ENCODE measurements at regions of chr17 and their contacts with region 1.

Region 1: GRCh38 chr17:4004517-4005295 is 40.5 kb upstream of the ATP2A3 start:
- DNase-seq: peak; percentile 78 to 90
- H3K4me3 ChIP-seq: no peak overlapping the region
- H3K27ac ChIP-seq: peak overlapping the region in 4 of 5 donors; percentile 63 to 77 (median 73)
- H3K4me1 ChIP-seq: peaks cover 20 to 66% (median 47%) of the 10 kb centered on the region in 4 donors
- H3K27me3 ChIP-seq: no peaks in the 10 kb centered on the region
- CTCF ChIP-seq: peak in 6 of 7 experiments; percentile 59 to 96 (median 94)
- EP300 ChIP-seq: no peak
- POLR2A ChIP-seq: no peak

Region 2: GRCh38 chr17:3893003-3893719 is 111.5 kb before region 1 on chr17 and contains the start of gene CAMKK1:
- intact Hi-C with region 1: no loop called
- DNase-seq: peak; percentile 91 to 96
- H3K4me3 ChIP-seq: peak within 1 kb of the TSS; percentile 67 to 92 (median 70)
- H3K27ac ChIP-seq: peak within 1 kb of the TSS; percentile 82 to 88 (median 87)
- H3K4me1 ChIP-seq: peaks cover 66 to 76% (median 75%) of the 10 kb centered on the region in 4 donors
- H3K27me3 ChIP-seq: no peaks in the 10 kb centered on the region
- CTCF ChIP-seq: no peak
- EP300 ChIP-seq: no peak
- POLR2A ChIP-seq: no peak
- total RNA-seq, gene CAMKK1: 0.58 to 15.1 (median 6.2) TPM

Region 3: DNA sequence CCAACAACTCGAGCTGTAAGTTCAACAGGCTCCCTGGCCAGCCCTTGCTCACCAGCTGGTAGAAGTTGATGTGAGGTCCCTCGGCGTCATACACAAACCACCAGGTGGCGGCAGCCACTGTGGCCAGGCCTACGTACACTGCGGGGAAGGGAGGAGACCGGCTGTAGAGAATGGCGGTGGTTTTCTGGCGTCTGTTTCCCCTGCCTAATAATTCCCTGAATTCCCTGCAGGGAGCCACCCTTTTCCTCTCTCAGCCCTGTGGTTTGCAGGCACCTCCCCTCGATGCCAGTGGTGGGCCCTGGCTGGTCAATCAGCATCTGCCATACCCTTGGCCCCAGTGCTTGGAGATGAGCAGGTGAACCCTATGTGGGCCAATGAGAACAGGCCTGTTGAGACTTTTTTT is 69.6 kb before region 1 on chr17:
- intact Hi-C with region 1: loop called (anchors 5 kb)
- DNase-seq: peak; percentile 87 to 94
- H3K4me3 ChIP-seq: no peak overlapping the region
- H3K27ac ChIP-seq: no peak overlapping the region
- H3K4me1 ChIP-seq: peaks cover 0 to 8% (median 7%) of the 10 kb centered on the region in 4 donors
- H3K27me3 ChIP-seq: no peaks in the 10 kb centered on the region
- CTCF ChIP-seq: peak in 5 of 7 experiments; percentile 62 to 86 (median 65)
- EP300 ChIP-seq: no peak
- POLR2A ChIP-seq: no peak